Tibial artery (tissue), 4 donors: ENCODE measurements at regions of chr14 and their contacts with region 1.

Region 1: DNA sequence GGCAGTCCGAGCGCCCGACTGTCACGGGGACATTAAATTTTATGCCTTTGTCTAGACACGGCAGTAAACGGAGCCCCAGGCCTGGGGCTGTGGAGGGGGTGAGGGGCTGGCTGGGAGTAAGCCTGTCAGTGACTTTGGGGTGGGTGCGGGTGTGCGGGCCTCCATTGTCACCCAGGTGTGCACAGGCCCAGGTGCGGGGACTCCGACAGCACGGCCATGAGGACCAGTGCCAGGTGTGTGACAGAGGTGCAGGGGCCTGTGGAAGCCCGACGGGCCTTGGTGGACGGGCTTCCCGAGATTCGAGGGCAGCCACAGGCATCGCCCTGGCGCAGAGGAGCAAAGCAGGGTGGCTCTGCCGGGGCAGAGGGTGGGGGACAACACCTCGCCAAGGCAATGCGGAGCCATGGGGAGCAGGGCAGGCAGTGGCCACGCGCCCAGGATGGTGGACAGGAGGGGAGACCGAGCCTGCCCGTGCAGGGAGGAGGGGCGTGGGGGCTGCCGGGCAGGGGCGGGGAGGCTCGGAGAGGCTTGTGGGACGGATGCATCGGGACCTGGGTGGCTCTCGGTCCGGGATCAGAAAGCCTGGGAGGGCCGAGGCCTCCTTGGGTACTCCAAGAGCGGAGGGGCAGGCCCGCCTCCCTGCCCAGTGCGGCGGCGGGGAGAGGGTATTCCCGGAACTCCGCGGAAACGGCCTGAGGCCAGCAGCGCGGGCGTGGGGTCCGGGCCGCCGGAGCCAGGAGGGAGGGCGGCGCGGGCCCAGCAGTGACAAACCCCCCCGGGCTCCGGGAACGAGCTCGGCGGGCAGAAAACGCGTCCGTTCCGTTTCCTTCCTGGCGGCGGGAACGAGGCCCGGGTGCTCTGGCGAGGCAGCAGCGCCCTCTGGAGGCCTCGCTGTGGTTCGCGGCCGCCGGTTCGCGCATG is 1.5 kb downstream of the TMEM121 start:
- DNase-seq: peak; percentile 64 to 86
- H3K4me3 ChIP-seq: peak overlapping the region; percentile 54 to 67
- H3K27ac ChIP-seq: peak overlapping the region; percentile 42 to 60
- H3K4me1 ChIP-seq: peaks cover 0 to 39% (median 33%) of the 10 kb centered on the region in 4 donors
- H3K27me3 ChIP-seq: peaks cover 0 to 49% of the 10 kb centered on the region in 2 donors
- CTCF ChIP-seq: peak; percentile 87 to 92

Region 2: GRCh38 chr14:105201925-105202513 is 325.9 kb before region 1 on chr14:
- intact Hi-C with region 1: loop called (anchors 2 kb)
- DNase-seq: no peak
- H3K4me3 ChIP-seq: no peak overlapping the region
- H3K27ac ChIP-seq: no peak overlapping the region
- H3K4me1 ChIP-seq: peaks cover 0 to 57% (median 33%) of the 10 kb centered on the region in 4 donors
- H3K27me3 ChIP-seq: peaks cover 0 to 62% of the 10 kb centered on the region in 2 donors
- CTCF ChIP-seq: no peak

Region 3: GRCh38 chr14:105366386-105367074 is 161.4 kb before region 1 on chr14:
- intact Hi-C with region 1: loop called (anchors 2 kb)
- DNase-seq: no peak
- H3K4me3 ChIP-seq: no peak overlapping the region
- H3K27ac ChIP-seq: no peak overlapping the region
- H3K4me1 ChIP-seq: peaks cover 0 to 11% (median 3%) of the 10 kb centered on the region in 4 donors
- H3K27me3 ChIP-seq: no peaks in the 10 kb centered on the region
- CTCF ChIP-seq: no peak

Region 4: DNA sequence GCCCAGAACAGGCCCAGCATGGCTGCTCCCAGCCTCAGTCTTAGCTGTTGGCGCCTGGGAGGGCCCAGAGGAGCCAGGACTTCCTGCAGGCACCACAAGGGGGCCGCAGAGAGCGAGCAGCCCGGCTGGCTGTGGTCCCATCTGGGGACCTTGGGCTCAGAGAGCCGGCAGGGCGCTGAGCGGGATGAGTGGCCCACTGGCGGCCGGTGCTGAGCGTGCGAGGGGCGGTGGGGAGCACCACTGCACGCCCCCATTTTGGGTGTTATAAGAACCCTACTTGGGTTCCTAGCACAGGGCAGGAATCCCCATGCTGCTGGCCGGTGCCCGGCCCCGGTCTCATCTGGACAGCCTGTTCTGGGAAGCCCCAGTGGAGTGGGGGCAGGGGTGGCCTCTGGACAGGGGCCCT is 79.2 kb before region 1 on chr14:
- intact Hi-C with region 1: loop called (anchors 5 kb)
- DNase-seq: peak; percentile 59 to 88
- H3K4me3 ChIP-seq: no peak overlapping the region
- H3K27ac ChIP-seq: peak overlapping the region; percentile 10 to 71
- H3K4me1 ChIP-seq: peaks cover 0 to 16% (median 12%) of the 10 kb centered on the region in 4 donors
- H3K27me3 ChIP-seq: no peaks in the 10 kb centered on the region
- CTCF ChIP-seq: peak; percentile 93 to 98

Region 5: DNA sequence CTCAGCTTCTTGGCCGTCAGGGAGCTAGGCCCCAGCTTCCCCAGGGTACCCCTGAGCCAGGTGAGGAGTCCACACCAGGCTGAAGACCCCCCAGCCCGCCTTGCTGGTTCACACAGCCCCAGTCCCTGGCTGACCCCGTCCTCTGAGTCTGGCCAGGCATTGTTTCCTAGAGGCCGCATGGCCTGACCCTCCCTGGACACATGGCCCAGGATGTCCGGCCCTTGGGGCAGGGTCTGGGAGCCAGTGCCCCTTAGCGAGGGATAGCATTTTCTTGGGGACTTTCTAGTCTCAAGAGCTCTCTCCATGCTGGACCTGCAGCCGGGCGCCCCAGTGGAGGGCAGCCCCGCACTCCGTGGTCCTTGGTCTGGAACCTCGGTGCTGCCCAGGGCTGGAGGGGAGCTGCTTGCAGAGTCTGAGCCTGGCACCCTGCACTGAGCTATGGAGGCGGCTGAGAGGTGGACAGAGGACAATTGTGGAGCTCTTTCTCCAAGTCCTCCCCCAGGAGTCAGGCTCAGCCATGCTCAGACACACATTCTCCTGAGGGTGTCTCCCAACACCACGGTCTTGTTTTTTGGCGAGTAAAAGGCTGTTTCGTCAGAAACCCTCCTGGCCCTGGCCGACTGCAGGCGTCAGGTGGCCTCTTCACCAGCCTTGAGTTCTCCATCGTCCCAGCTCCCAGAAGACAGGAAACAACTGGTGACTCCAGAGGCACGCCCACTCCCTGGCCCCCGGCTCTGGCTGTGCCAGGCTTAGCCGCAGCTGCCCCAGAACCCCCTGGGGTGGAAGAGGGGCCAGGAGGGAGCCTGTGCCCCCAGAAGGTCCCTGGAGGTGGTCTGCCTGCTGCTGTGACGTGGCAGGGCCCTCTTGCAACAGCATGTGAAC is 70.9 kb before region 1 on chr14:
- intact Hi-C with region 1: loop called (anchors 2 kb)
- DNase-seq: no peak
- H3K4me3 ChIP-seq: no peak overlapping the region
- H3K27ac ChIP-seq: no peak overlapping the region
- H3K4me1 ChIP-seq: no peaks in the 10 kb centered on the region
- H3K27me3 ChIP-seq: no peaks in the 10 kb centered on the region
- CTCF ChIP-seq: no peak